ENCODE measurements at regions of chr13 and their contacts with region 1.

Region 1: GRCh38 chr13:49844181-49844580 is 51.7 kb upstream of the KPNA3 start:
- DNase-seq: no peak
- H3K4me3 ChIP-seq: no peak overlapping the region
- H3K27ac ChIP-seq: no peak overlapping the region
- H3K4me1 ChIP-seq: no peaks in the 10 kb centered on the region
- H3K27me3 ChIP-seq: no peaks in the 10 kb centered on the region
- CTCF ChIP-seq: no peak

Region 2: DNA sequence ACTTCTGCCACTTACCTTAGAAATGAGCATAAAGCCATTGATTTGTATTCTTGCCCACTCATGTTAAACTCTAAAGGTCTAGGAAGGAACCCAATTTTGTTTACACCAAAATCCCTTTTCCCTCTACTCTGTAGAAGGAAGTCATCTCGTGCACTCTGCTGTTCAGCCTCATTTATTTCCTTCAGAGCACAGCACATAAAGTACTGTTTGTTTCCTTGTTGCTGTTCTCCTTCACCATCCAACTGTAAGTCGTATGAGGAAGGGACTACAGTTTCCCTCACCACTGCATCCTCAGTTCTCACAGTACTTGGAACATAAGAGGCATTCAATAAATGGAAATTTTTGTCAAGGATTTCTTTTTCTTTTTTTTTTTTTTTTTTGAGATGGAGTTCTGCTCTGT is 571.9 kb before region 1 on chr13:
- CTCF ChIA-PET with region 1: no interaction called
- dilution Hi-C with region 1: no loop called
- in situ Hi-C with region 1: no loop called
- intact Hi-C with region 1: no loop called
- DNase-seq: no peak
- H3K4me3 ChIP-seq: no peak overlapping the region
- H3K27ac ChIP-seq: no peak overlapping the region
- H3K4me1 ChIP-seq: no peaks in the 10 kb centered on the region
- H3K27me3 ChIP-seq: no peaks in the 10 kb centered on the region
- CTCF ChIP-seq: no peak

Region 3: GRCh38 chr13:49652355-49653305 is 191.6 kb before region 1 on chr13:
- CTCF ChIA-PET with region 1: no interaction called
- dilution Hi-C with region 1: no loop called
- in situ Hi-C with region 1: no loop called
- intact Hi-C with region 1: loop called (anchors 1 kb)
- DNase-seq: no peak
- H3K4me3 ChIP-seq: no peak overlapping the region
- H3K27ac ChIP-seq: no peak overlapping the region
- H3K4me1 ChIP-seq: no peaks in the 10 kb centered on the region
- H3K27me3 ChIP-seq: no peaks in the 10 kb centered on the region
- CTCF ChIP-seq: peak; percentile 54 to 62

Region 4: DNA sequence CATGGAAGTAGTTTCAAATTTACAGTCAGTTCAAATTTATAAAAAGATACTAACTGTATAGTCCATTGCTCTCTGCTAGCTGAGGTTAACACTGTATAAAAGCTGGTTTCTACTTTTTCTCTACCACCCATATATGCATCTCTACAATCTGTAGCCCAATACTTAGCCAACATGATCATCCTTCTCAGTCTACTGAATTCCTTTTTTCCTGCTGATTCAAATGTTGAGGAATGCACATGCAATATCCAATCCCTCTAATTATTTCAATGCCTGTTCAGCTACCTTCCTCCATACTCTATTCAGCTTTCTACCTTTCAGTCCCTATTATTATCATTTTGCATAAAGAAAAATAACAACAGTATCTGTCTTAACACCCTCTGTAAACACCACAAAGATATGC is 67.3 kb before region 1 on chr13:
- CTCF ChIA-PET with region 1: no interaction called
- dilution Hi-C with region 1: no loop called
- in situ Hi-C with region 1: no loop called
- intact Hi-C with region 1: no loop called
- DNase-seq: no peak
- H3K4me3 ChIP-seq: no peak overlapping the region
- H3K27ac ChIP-seq: no peak overlapping the region
- H3K4me1 ChIP-seq: no peaks in the 10 kb centered on the region
- H3K27me3 ChIP-seq: no peaks in the 10 kb centered on the region
- CTCF ChIP-seq: no peak

Region 5: DNA sequence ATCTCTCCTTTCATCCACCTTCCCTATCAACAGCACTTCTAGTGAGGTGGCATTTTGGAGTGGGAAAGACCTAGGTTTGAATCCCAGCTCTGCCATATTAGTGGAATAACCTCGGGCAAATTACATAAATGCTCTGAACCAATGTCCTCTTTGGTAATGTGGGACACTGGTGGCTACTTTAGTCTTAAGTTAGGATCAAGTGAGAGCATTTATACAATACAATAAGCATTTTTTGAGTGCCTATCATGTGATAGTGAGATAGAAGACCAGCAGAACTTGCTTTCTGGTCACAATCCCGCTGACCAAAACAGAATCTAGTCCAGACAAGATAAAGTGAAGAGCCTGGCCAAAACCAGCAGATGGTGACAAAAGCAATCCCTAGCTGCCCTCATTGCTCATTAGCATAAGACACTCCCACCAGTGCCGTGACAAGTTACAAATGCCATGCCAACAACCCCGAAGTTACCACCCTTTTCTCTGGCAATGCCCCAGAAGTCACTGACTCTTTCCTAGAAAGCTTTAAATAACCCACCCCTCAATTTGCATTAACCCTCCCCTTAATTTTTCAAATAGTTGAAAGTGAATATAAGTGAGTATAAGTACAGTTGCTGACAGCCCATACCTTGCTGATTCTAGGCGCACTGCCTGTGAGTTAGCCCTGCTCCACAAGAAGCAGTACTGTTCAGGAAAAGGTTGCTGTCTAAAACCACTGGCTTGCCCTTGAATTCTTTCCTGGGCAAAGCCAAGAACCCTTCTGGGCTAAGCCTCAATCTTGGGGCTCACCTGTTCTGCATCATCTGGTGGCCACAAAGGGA is 22.8 kb before region 1 on chr13:
- CTCF ChIA-PET with region 1: no interaction called
- dilution Hi-C with region 1: no loop called
- in situ Hi-C with region 1: no loop called
- intact Hi-C with region 1: loop called (anchors 2 kb)
- DNase-seq: no peak
- H3K4me3 ChIP-seq: no peak overlapping the region
- H3K27ac ChIP-seq: no peak overlapping the region
- H3K4me1 ChIP-seq: no peaks in the 10 kb centered on the region
- H3K27me3 ChIP-seq: no peaks in the 10 kb centered on the region
- CTCF ChIP-seq: peak; percentile 9 to 14